Activated CD8-positive, alpha-beta memory T cell treated with anti-CD3 and anti-CD28 coated beads, Interleukin-2, amount 10 ng/mL, durations not matched to agents 7 days and 5 days (primary cell): ENCODE measurements at regions of chr9 and their contacts with region 1.

Region 1: DNA sequence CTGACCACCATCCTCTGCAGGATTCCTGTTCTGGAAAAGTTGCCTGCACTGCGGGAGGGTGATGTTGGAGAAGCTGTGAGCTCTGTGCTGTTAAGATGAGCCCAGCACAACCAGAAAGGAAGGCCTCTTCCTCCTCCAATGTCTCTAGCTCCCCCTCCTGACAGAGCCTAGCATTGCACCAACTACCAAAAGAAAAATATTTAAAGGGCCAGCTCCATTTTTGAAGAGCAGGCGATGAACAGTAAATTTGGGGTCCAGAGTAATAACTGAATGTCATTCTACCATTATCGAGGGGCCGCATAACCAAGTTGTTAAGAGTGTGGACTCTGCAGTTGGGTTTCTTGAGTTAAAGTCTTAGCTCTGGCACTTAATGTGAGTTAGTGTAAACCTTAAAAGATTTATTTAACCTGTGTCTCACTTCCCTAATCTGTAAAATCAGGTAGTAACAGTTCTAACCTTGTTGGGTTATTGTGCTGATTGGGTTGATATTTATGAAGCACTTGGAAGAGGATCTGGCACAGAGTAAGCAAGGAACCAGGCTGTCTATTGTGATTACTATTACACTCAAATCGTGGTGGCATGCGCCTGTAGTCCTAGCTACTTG is 3.9 kb downstream of the TEX53 start:
- DNase-seq: peak; percentile 89
- ATAC-seq: peak; percentile 88
- H3K4me3 Mint-ChIP-seq: no peak overlapping the region
- H3K27ac Mint-ChIP-seq: peak overlapping the region; percentile 55
- H3K4me1 Mint-ChIP-seq: peaks cover 24% of the 10 kb centered on the region
- H3K27me3 Mint-ChIP-seq: no peaks in the 10 kb centered on the region

Region 2: GRCh38 chr9:114405294-114406034 is 248.2 kb before region 1 on chr9:
- CTCF ChIA-PET with region 1: interaction called, 207 read pairs
- DNase-seq: peak; percentile 87
- ATAC-seq: peak; percentile 98
- H3K4me3 Mint-ChIP-seq: no peak overlapping the region
- H3K27ac Mint-ChIP-seq: peak overlapping the region; percentile 34
- H3K4me1 Mint-ChIP-seq: peaks cover 12% of the 10 kb centered on the region
- H3K27me3 Mint-ChIP-seq: no peaks in the 10 kb centered on the region

Region 3: GRCh38 chr9:114434878-114435311 is 218.8 kb before region 1 on chr9:
- CTCF ChIA-PET with region 1: interaction called, 60 read pairs
- DNase-seq: no peak
- ATAC-seq: peak; percentile 41
- H3K4me3 Mint-ChIP-seq: no peak overlapping the region
- H3K27ac Mint-ChIP-seq: no peak overlapping the region
- H3K4me1 Mint-ChIP-seq: peaks cover 5% of the 10 kb centered on the region
- H3K27me3 Mint-ChIP-seq: no peaks in the 10 kb centered on the region

Region 4: DNA sequence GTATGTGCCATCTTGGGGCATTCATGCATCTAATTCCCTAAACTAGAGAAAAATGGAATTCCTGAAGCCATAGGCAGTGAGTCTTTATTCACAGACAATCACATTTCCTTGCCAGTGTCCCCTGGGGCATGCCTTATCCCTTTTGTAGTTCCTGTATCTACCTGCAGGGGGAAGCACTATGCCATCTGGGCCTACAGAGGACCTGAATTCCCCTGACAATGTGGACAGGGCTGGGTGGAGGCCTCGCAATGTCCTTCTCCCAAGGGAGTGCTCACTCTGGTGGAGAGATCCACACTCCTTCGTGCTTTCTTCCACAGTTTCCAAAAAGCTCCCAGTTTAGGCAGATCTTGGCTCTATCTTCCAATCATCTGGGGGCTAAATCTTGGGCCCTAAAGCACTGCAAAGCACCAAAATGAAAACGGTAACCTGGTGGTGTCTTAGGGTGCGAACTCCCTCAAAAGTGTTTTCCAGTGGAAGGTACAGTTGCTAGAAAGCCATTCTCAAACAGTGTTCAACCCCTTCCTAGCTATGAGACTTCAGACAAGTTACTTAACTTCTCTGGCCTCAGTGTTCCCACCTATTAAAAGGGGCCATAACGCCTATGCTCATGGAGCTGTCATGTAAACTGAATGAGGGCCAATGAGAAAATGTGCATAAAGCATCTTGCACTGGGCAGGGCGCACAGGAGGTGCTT is 165.9 kb before region 1 on chr9:
- CTCF ChIA-PET with region 1: interaction called, 75 read pairs
- DNase-seq: peak; percentile 73
- ATAC-seq: peak; percentile 60
- H3K4me3 Mint-ChIP-seq: no peak overlapping the region
- H3K27ac Mint-ChIP-seq: no peak overlapping the region
- H3K4me1 Mint-ChIP-seq: peaks cover 27% of the 10 kb centered on the region
- H3K27me3 Mint-ChIP-seq: no peaks in the 10 kb centered on the region

Region 5: GRCh38 chr9:114518599-114519022 is 135.0 kb before region 1 on chr9:
- CTCF ChIA-PET with region 1: interaction called, 11 read pairs
- DNase-seq: no peak
- ATAC-seq: peak; percentile 70
- H3K4me3 Mint-ChIP-seq: no peak overlapping the region
- H3K27ac Mint-ChIP-seq: peak overlapping the region; percentile 64
- H3K4me1 Mint-ChIP-seq: peaks cover 12% of the 10 kb centered on the region
- H3K27me3 Mint-ChIP-seq: peaks cover 28% of the 10 kb centered on the region

Region 6: DNA sequence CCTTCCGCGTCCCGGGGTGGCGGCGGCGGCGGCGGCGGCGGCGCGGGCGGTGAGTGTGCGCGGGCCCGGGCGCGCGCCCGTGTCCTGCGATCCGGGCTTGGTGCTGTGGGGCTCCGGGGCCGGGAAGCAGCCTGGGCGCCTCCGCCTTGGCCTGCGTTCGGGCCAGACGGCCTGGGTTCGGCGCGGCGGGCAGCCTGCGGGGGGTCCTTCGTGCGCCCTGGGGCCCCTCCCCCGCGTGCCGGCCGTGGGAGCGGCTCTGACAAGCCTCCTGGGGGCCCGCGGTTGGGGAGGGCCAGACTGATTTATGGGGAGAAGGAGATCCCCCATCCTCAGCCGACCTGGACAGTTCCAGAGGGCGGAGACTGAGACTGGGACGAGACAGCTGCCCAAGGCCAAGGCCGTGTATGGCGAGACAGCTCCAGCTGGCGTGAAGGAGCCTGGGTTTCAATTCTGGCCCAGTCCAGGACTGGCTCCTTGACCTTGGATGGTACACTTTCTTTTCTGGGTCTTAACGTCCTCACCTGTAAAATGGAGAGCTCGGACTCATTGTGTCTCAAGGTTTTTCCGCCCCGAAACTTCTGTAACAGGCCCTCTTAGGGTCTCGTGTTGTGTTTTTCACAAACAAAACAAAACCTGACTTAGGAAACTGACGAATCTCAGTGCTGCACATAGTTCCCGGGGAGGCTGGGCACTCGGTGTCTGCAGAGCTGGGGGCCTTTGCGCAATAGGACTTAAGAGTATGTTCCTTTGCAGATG is 42.0 kb before region 1 on chr9:
- CTCF ChIA-PET with region 1: interaction called, 28 read pairs
- DNase-seq: peak; percentile 60
- ATAC-seq: peak; percentile 76
- H3K4me3 Mint-ChIP-seq: peak overlapping the region; percentile 91
- H3K27ac Mint-ChIP-seq: peak overlapping the region; percentile 92
- H3K4me1 Mint-ChIP-seq: peaks cover 45% of the 10 kb centered on the region
- H3K27me3 Mint-ChIP-seq: no peaks in the 10 kb centered on the region